Gastrocnemius medialis (tissue), 4 donors: ENCODE measurements at regions of chr19 and their contacts with region 1.

Region 1: GRCh38 chr19:2578901-2579677 is 103.2 kb downstream of the GADD45B start:
- DNase-seq: peak; percentile 81 to 88
- ATAC-seq: peak; percentile 87 to 88
- H3K4me3 ChIP-seq: peak overlapping the region; percentile 55 to 66 (median 60)
- H3K27ac ChIP-seq: peak overlapping the region; percentile 81 to 89 (median 88)
- H3K4me1 ChIP-seq: peaks cover 32 to 38% of the 10 kb centered on the region in 2 donors
- H3K27me3 ChIP-seq: no peaks in the 10 kb centered on the region
- CTCF ChIP-seq: peak; percentile 96 to 98 (median 98)
- POLR2A ChIP-seq: peak in 1 of 2 donors; percentile 24

Region 2: DNA sequence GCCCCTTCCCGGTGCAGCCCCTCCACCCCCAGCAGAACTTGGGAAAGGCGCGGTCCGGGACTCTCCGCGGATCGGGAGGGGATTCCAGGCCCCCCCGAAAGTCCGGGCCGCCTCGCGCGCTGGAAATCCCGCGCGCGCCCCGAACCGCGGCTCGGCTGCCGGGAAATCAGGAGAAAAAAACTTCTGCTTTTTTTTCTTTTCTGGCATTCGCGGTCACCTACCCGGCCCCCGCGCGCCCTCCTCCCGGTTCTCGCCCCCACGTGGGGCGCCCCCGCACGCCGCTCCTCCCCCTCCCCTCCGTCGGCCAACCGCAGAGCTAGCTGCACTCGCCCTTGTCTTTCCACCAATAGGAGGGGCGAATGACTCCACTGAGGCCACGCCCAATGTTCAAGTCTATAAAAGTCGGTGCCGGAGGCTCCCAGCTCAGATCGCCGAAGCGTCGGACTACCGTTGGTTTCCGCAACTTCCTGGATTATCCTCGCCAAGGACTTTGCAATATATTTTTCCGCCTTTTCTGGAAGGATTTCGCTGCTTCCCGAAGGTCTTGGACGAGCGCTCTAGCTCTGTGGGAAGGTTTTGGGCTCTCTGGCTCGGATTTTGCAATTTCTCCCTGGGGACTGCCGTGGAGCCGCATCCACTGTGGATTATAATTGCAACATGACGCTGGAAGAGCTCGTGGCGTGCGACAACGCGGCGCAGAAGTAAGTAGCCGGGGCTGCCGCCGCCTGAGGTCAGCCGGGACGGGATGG is 103.2 kb before region 1 on chr19 and contains the start of gene GADD45B:
- in situ Hi-C with region 1: loop called in 2 of 4 experiments (anchors 5 to 10 kb)
- intact Hi-C with region 1: loop called (anchors 1 kb)
- DNase-seq: peak; percentile 95 to 96
- ATAC-seq: peak; percentile 85 to 86
- H3K4me3 ChIP-seq: peak within 1 kb of the TSS; percentile 66 to 92 (median 84)
- H3K27ac ChIP-seq: peak within 1 kb of the TSS; percentile 81 to 98 (median 90)
- H3K4me1 ChIP-seq: peaks cover 21 to 42% of the 10 kb centered on the region in 2 donors
- H3K27me3 ChIP-seq: no peaks in the 10 kb centered on the region
- CTCF ChIP-seq: peak in 1 of 5 experiments; percentile 15
- POLR2A ChIP-seq: peak; percentile 100
- total RNA-seq, gene GADD45B: 32.2 to 48.7 (median 41.7) TPM

Region 3: GRCh38 chr19:2610637-2611482 is 31.8 kb after region 1 on chr19:
- in situ Hi-C with region 1: no loop called
- intact Hi-C with region 1: loop called (anchors 1 kb)
- DNase-seq: peak; percentile 80 to 83
- ATAC-seq: peak; percentile 95 to 96
- H3K4me3 ChIP-seq: peak overlapping the region; percentile 52 to 88 (median 64)
- H3K27ac ChIP-seq: peak overlapping the region; percentile 72 to 84 (median 84)
- H3K4me1 ChIP-seq: no peaks in the 10 kb centered on the region
- H3K27me3 ChIP-seq: no peaks in the 10 kb centered on the region
- CTCF ChIP-seq: peak; percentile 94 to 99 (median 99)
- POLR2A ChIP-seq: peak in 1 of 2 donors; percentile 13

Region 4: GRCh38 chr19:2627319-2627829 is 48.3 kb after region 1 on chr19:
- in situ Hi-C with region 1: no loop called
- intact Hi-C with region 1: loop called (anchors 1 kb)
- DNase-seq: peak; percentile 89 to 93
- ATAC-seq: peak; percentile 93 to 96
- H3K4me3 ChIP-seq: no peak overlapping the region
- H3K27ac ChIP-seq: peak overlapping the region; percentile 81 to 94 (median 88)
- H3K4me1 ChIP-seq: peaks cover 19 to 24% of the 10 kb centered on the region in 2 donors
- H3K27me3 ChIP-seq: no peaks in the 10 kb centered on the region
- CTCF ChIP-seq: peak in 1 of 5 experiments; percentile 53
- POLR2A ChIP-seq: peak; percentile 83 to 92